ENCODE measurements at regions of chr3 and their contacts with region 1.

Region 1: DNA sequence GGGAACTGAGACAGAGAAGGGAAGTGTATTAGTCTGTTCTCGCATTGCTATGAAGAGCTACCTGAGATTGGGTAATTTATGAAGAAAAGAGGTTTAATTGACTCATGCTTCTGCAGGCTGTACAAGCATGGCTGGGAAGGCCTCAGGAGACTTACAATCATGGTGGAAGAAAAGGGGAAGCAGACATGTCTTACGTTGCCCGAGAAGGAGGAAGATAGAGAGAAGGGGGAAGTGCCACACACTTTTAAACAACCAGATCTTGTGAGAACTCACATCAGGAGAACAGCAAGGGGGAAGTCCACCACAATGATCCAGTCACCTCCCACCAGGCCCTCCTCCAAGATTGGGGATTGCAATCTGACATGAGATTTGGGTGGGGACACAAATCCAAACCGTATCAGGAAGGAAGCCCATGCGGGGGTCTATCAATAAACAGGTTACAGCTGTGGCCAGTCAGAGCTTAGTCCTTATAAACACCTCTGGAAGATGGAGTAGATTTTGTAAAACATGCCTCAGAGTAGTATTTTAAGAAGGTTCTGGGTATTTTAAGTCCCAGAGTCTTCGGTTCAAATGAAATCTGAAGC is 153.9 kb downstream of the GHSR start:
- DNase-seq: no peak
- ATAC-seq: no peak
- H3K4me3 ChIP-seq: no peak overlapping the region
- H3K27ac ChIP-seq: no peak overlapping the region
- H3K4me1 ChIP-seq: peaks cover 0 to 3% of the 10 kb centered on the region in 2 donors
- H3K27me3 ChIP-seq: no peaks in the 10 kb centered on the region

Region 2: DNA sequence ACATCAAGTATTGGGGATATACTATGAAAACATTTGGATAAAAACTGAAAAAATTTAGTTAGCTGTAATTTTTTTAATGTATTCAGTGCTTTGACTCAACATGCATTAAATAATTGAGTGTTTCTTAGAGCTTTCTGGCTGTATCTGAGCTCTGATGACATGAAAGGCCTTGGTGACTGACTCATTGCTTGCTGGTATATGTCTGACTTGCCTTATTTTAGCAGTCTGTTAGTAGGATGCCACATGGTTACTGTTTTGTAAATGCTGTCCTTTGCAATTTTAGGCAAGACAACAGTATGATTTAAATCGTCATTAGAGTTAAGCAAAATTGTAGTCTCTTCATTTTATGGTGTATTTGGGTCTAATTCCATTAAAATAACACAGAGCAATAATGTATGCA is 45.3 kb before region 1 on chr3:
- intact Hi-C with region 1: no loop called
- DNase-seq: no peak
- ATAC-seq: no peak
- H3K4me3 ChIP-seq: no peak overlapping the region
- H3K27ac ChIP-seq: no peak overlapping the region
- H3K4me1 ChIP-seq: no peaks in the 10 kb centered on the region
- H3K27me3 ChIP-seq: no peaks in the 10 kb centered on the region

Region 3: DNA sequence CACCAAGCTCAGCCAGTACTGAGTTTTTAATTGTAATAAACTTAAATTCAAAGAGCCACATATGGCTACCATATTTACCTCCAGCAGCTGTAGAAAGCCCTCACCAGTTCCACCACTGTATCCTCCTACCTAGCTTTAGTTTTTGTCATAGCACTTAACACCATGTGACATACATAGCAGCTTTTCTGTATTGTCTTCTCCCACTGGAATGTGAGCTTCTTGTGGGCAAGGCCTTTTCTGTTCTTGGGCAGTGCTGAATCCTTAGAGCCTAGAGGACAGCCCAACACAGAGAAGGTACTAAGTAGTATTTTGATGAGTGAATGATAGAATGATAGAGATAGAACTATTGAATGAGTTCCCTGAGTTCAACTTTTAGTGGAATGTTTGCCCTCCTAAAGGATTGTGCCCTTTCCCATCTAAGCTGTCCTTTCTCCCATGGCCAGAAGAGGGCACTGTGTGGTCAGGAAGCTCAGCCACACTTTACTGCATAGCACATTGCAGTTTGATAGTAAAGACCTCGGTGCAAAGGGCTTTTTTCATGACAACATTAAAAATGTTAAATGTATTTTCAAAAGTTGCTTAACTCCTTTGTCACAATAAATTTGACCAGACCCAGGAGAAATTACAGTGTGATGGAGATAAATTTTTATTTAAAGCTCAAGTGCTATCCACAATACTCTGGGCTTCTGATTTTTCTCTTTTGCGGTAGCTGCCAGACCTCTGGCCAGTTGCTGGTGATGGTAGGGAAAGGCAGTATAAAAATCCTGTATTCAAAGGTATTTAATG is 38.1 kb after region 1 on chr3:
- intact Hi-C with region 1: loop called in 1 of 2 experiments (anchors 5 kb)
- DNase-seq: peak in 1 of 2 donors; percentile 62
- ATAC-seq: peak; percentile 93
- H3K4me3 ChIP-seq: no peak overlapping the region
- H3K27ac ChIP-seq: peak overlapping the region in 1 of 2 donors; percentile 4
- H3K4me1 ChIP-seq: no peaks in the 10 kb centered on the region
- H3K27me3 ChIP-seq: no peaks in the 10 kb centered on the region

Region 4: DNA sequence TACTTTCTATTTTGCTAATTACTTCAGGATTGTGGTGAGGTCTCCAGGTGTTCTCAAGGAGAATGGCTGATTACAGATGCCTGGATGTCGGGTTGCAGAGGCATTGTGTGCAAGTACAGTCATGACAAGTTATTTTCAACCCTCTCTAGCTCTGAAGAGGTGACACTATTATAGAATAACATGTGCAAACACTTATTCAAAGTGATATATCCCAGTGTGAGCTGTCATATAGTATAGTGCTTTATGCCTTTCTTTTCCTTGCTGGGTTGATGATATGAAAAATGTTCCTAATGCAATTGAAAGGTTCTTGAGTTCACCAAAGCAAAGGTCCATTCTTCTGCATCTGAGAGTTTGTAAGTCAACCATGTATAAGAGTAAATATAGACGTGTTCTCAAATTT is 679.5 kb after region 1 on chr3:
- intact Hi-C with region 1: no loop called
- DNase-seq: no peak
- ATAC-seq: no peak
- H3K4me3 ChIP-seq: no peak overlapping the region
- H3K27ac ChIP-seq: no peak overlapping the region
- H3K4me1 ChIP-seq: no peaks in the 10 kb centered on the region
- H3K27me3 ChIP-seq: no peaks in the 10 kb centered on the region